SK-N-SH (cell line): ENCODE measurements at regions of chr9 and their contacts with region 1.

Region 1: GRCh38 chr9:114108016-114108833 is 9.1 kb upstream of the KIF12 start:
- DNase-seq: peak; percentile 88
- H3K4me3 ChIP-seq: no peak overlapping the region; a peak in 1 of 4 replicates
- H3K27ac ChIP-seq: no peak overlapping the region
- H3K4me1 ChIP-seq: no peaks in the 10 kb centered on the region; a peak in 1 of 4 replicates
- H3K27me3 ChIP-seq: no peaks in the 10 kb centered on the region; the same call in 1 of the 2 replicates
- CTCF ChIP-seq: peak; percentile 82
- EP300 ChIP-seq: no peak
- RAD21 ChIP-seq: peak; percentile 92

Region 2: DNA sequence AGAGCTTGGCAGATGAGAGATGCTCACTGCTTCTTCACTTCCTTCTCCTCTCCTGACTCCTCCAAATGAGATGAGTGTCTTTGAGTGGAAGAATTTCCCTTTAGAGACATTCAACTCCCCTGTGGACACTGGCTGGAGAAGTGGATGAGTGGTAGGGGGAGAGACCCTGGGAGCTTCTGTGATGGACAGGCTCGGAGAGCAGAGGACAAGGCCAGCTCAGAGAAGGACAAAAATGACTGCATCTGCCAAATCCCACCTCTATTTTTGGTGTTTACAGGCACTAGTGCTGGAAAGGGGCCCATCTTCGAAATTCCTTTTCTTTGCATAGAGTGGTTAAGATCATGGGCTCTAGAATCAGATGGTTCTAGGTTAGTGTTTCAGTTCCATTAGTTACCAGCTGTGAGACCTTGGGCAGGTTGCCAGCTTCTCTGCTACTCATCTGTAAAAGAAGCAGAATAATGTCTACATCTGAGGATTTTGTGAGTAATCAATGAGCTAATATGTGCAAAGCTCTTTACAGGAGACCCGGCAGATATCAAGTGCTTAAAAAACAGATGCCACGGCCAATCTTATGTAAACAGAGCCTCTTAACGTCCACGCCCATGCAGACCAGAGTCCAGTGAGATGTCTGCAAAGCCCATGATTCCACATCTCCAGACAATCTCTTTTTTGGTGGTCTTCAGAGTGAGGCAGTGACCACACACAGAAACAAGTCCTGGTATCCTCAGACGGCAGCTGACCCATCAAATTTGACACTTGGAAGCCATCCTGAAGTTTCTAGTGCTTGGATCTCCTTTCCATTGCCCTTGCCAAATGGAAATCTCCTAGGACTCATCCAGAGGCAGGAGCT is 33.6 kb after region 1 on chr9:
- CTCF ChIA-PET with region 1: interaction called, 16 read pairs
- POLR2A ChIA-PET with region 1: no interaction called
- DNase-seq: no peak
- H3K4me3 ChIP-seq: no peak overlapping the region
- H3K27ac ChIP-seq: no peak overlapping the region
- H3K4me1 ChIP-seq: no peaks in the 10 kb centered on the region
- H3K27me3 ChIP-seq: peaks cover 50% of the 10 kb centered on the region
- CTCF ChIP-seq: no peak
- EP300 ChIP-seq: no peak
- RAD21 ChIP-seq: no peak

Region 3: DNA sequence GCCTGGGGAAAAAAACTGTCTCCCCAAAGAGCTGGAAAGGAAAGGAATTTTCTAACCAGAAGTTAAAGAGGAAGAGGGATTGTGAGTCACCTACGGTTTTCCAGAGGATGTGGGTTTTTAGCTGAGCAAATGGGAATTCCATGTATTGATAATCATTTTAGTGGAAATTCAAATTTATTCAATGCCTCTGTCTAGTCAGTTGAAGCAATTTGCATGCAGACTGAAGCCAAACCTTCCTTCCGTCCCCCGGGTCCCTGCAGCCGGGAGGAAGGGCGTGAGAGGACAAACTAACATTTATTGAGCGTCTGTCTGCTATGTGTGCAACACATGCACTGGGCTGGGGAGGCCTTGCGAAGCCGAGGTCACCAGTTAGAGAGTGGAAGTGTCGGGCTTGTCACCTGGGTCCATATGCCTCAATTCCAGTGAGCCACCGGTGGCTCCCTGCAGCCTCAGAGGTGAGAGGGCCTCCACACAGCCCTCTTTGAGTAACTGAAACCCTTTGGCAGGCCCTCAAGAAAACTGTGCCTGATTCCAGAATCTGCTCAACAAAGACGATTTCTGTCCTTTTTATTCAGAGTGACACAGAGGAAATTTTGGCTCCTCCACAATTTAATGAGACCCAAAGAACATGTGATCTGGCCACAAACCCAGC is 117.5 kb after region 1 on chr9:
- CTCF ChIA-PET with region 1: interaction called, 10 read pairs
- POLR2A ChIA-PET with region 1: no interaction called
- DNase-seq: no peak
- H3K4me3 ChIP-seq: no peak overlapping the region
- H3K27ac ChIP-seq: peak overlapping the region; percentile 14 to 89; a peak in 3 of 4 replicates
- H3K4me1 ChIP-seq: peaks cover 23 to 25% of the 10 kb centered on the region in 2 experiments; a peak in 3 of 4 replicates
- H3K27me3 ChIP-seq: no peaks in the 10 kb centered on the region
- CTCF ChIP-seq: no peak
- EP300 ChIP-seq: no peak
- RAD21 ChIP-seq: no peak

Region 4: GRCh38 chr9:114238891-114239875 is 131.0 kb after region 1 on chr9:
- CTCF ChIA-PET with region 1: interaction called, 10 read pairs
- POLR2A ChIA-PET with region 1: no interaction called
- DNase-seq: peak; percentile 94
- H3K4me3 ChIP-seq: no peak overlapping the region
- H3K27ac ChIP-seq: no peak overlapping the region; a peak in 1 of 4 replicates
- H3K4me1 ChIP-seq: peaks cover 0 to 42% of the 10 kb centered on the region in 2 experiments; a peak in 2 of 4 replicates
- H3K27me3 ChIP-seq: no peaks in the 10 kb centered on the region
- CTCF ChIP-seq: peak; percentile 46
- EP300 ChIP-seq: 0 out of 4 replicates have a peak, but pooled peaks of 1 of the 2 experiments have one; percentile 21
- RAD21 ChIP-seq: peak; percentile 87

Region 5: GRCh38 chr9:114263853-114264510 is 155.8 kb after region 1 on chr9:
- CTCF ChIA-PET with region 1: interaction called, 78 read pairs
- POLR2A ChIA-PET with region 1: no interaction called
- DNase-seq: no peak
- H3K4me3 ChIP-seq: no peak overlapping the region
- H3K27ac ChIP-seq: no peak overlapping the region
- H3K4me1 ChIP-seq: peaks cover 0 to 19% of the 10 kb centered on the region in 2 experiments; a peak in 1 of 4 replicates
- H3K27me3 ChIP-seq: no peaks in the 10 kb centered on the region
- CTCF ChIP-seq: no peak
- EP300 ChIP-seq: no peak
- RAD21 ChIP-seq: peak; percentile 28; the same call in 1 of the 2 replicates

Region 6: GRCh38 chr9:114271641-114272081 is 163.4 kb after region 1 on chr9:
- CTCF ChIA-PET with region 1: interaction called, 78 read pairs
- POLR2A ChIA-PET with region 1: no interaction called
- DNase-seq: peak; percentile 78
- H3K4me3 ChIP-seq: no peak overlapping the region
- H3K27ac ChIP-seq: no peak overlapping the region
- H3K4me1 ChIP-seq: peaks cover 0 to 2% of the 10 kb centered on the region in 2 experiments; a peak in 1 of 4 replicates
- H3K27me3 ChIP-seq: no peaks in the 10 kb centered on the region
- CTCF ChIP-seq: peak; percentile 55
- EP300 ChIP-seq: no peak
- RAD21 ChIP-seq: peak; percentile 80

Region 7: DNA sequence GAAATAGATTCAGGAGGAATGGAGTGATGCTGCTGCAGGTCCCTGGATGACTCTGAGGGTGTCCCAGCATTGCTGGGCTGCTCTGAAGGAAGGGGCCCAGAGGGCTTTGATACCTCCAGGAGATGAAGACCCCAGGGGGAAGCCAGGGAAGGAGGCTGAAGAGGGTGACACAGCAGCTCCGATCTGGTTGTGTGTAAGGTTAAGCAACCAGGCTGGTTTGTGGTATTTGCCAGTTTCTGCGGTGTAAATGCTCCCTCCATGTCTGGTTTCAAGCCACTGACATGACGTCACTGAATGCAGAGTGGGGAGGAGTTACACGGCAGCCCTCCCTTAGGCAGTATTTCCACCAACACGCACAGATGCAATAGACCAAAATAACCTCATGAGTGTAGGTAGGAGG is 174.7 kb after region 1 on chr9:
- CTCF ChIA-PET with region 1: interaction called, 269 read pairs
- POLR2A ChIA-PET with region 1: no interaction called
- DNase-seq: peak; percentile 76
- H3K4me3 ChIP-seq: no peak overlapping the region
- H3K27ac ChIP-seq: peak overlapping the region; percentile 17 to 49; a peak in 3 of 4 replicates
- H3K4me1 ChIP-seq: peaks cover 18 to 50% of the 10 kb centered on the region in 2 experiments
- H3K27me3 ChIP-seq: no peaks in the 10 kb centered on the region
- CTCF ChIP-seq: no peak
- EP300 ChIP-seq: no peak
- RAD21 ChIP-seq: no peak